Left colon (tissue), 2 donors: ENCODE measurements at regions of chr15 and their contacts with region 1.

Region 1: DNA sequence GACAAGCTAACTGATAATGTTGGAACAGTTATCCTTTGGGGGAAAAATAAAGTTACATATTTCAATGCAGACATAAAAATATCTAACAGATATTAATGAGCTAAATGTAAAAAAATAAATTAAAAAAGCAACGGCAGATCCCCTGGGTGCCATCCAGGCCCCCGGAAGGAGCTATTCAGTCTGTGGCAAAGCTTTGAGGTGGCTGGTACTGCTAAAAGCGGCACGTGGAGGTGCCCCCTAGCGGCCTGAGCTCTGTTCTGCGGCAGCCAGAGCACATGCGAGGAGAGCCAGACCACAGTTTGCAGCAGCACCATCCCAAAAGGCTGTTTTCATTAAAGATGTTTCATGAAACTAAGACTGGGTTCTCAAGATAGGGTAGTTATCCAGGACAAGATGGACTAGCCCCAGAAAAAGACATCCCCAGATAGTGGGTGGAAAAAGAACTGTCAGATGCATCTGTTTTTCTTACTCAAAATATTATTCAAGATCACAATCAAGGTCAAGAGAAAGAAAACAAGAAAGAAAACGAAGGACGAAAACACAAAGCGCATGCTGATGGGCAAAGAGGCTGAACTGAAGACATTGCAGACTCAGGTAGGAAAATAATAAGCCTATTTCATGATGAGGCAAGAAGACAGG is 18.7 kb downstream of the AP3S2 start:
- DNase-seq: peak; percentile 73 to 93
- ATAC-seq: peak; percentile 87

Region 2: GRCh38 chr15:89750560-89751542 is 124.2 kb before region 1 on chr15 and contains the start of gene MESP1:
- intact Hi-C with region 1: loop called in 1 of 2 experiments (anchors 10 kb)
- DNase-seq: peak; percentile 92 to 95
- ATAC-seq: peak; percentile 80
- total RNA-seq, gene MESP1: 9.7 to 13.4 TPM

Region 3: DNA sequence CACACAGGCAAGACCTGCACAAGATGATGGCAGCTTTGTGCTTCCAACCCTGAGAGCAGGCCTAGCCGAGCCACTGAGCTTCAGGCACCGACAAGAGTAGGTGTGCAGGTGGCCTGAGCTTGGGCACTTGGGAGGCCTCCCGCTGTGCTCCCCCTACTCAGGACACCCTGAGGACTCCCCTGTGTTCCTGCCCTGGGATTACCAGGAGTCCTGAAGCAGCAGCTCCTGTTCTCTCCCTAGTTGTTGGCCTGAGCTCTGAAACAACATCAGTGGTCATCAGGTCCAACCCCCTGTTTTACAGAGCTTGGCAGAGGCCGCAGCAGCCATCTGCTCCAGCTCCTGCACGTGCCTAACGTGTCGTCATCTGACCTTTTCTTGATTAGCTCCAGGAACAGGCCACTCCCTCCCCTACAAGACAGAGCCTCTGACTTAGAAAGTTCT is 107.0 kb before region 1 on chr15:
- intact Hi-C with region 1: loop called in 1 of 2 experiments (anchors 5 kb)
- DNase-seq: peak; percentile 48 to 71
- ATAC-seq: peak; percentile 83

Region 4: DNA sequence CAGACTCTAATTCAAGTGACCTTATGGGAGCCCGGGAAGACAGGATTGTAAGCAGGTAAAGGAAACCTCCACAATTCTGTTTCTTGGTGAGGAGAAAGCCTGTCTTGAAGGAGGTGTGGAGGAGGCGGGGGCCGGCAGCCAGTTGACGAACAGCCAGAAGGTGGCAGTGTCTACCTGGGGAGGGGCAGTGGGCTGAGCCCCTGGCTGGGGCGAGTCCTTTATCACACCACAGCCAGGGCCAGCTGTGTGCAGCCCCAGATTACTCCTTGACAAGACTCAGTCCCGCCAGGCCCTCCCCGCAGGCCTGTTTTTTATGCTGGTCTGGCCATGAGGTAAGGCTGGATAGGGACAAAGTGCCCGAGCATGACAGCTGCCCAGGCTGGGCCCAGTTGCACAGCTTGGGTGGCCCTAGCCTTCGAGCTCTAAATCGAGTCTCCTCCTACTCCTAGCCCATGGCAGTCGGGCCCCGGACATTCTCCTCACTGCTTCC is 268.2 kb after region 1 on chr15:
- intact Hi-C with region 1: no loop called
- DNase-seq: peak; percentile 82 to 84
- ATAC-seq: peak; percentile 97